Dendritic cell treated with granulocyte-macrophage colony-stimulating factor and Interleukin-4, amounts not matched to agents 40 ng/mL and 50 ng/mL, for 4 days (primary cell): ENCODE measurements at regions of chr6 and their contacts with region 1.

Region 1: GRCh38 chr6:113805173-113805790 is 51.9 kb upstream of the MARCKS start:
- H3K4me3 Mint-ChIP-seq: no peak overlapping the region
- H3K27ac Mint-ChIP-seq: peak overlapping the region; percentile 55
- H3K4me1 Mint-ChIP-seq: peaks cover 56% of the 10 kb centered on the region
- H3K27me3 Mint-ChIP-seq: no peaks in the 10 kb centered on the region

Region 2: DNA sequence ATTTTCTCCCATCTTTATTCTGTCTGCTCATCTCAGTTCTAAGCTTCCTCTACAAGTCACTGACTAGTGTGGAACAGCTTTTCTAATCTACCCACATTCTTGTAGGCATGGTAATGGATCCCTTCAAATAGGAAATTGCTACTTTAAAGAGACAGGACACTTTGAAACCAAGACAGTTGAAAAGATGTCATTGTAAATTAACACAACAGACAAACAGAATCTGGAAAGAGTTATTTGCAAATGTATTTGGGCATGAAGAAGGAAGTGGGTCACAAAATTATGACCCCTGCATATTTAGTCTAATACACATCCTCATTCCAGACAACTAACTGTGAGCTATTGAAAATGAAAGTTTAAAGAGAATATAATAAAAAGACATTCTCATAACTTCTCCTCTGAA is 246.3 kb before region 1 on chr6:
- intact Hi-C with region 1: no loop called
- H3K4me3 Mint-ChIP-seq: no peak overlapping the region
- H3K27ac Mint-ChIP-seq: no peak overlapping the region
- H3K4me1 Mint-ChIP-seq: peaks cover 7% of the 10 kb centered on the region
- H3K27me3 Mint-ChIP-seq: no peaks in the 10 kb centered on the region

Region 3: DNA sequence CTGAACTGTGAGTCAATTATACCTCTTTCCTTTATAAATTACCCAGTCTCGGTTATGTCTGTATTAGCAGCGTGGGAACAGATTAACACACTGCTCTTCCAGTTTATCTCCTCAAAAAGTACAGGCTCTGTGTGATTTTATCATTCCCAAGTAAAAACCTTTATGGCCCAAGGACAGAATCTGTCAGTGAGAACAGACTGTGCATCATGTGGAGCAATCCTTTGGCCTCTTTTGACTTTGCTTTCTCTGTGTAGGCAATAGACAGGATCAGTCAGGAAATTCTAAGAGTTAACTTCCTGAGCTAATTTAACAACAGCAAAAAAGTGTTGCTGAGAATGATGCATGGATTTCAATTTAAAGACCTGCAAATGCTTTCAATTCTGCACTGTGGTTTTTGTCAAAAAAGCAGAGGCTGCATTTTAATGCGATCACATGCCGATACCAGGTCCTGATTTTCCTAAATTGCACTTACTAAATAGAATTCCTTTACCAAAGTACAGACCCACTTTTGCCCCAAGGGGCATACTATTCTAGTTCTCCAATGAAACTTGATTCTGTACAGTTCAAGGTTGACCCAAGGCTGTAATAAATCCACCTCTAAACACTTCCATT is 194.8 kb before region 1 on chr6:
- intact Hi-C with region 1: no loop called
- H3K4me3 Mint-ChIP-seq: no peak overlapping the region
- H3K27ac Mint-ChIP-seq: no peak overlapping the region
- H3K4me1 Mint-ChIP-seq: peaks cover 5% of the 10 kb centered on the region
- H3K27me3 Mint-ChIP-seq: no peaks in the 10 kb centered on the region

Region 4: DNA sequence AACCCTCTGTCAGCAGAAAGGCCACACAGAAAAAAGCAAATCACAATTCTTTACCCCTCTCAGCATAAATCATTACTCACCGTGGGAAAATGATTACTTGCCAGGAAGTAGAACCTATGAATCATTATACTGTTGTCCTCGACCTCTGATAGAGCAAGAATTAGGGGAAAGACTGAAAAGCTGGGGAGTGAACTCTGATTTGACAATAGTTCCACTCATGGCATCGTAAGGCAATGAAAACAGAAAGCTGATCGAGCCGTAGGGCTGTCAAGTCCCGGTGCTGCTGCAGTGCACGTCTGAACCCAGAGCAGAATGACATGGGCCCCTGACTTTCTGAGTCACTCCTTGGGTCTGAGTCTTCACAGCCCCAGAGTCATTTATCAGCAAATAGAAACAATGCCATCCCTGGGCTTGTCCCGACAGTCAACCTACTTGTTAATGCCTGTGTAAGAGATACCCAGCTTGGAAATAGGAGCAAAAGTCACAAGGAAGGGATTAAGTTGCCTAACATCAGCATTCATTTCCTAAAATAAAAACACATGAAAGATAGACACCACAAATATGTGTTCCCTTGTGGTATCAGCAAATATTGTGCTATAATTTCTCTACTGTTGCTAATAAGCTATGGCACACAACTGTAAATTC is 172.9 kb before region 1 on chr6:
- intact Hi-C with region 1: loop called (anchors 5 kb)
- H3K4me3 Mint-ChIP-seq: peak overlapping the region; percentile 48
- H3K27ac Mint-ChIP-seq: peak overlapping the region; percentile 95
- H3K4me1 Mint-ChIP-seq: peaks cover 58% of the 10 kb centered on the region
- H3K27me3 Mint-ChIP-seq: no peaks in the 10 kb centered on the region

Region 5: GRCh38 chr6:113654396-113654795 is 150.9 kb before region 1 on chr6:
- intact Hi-C with region 1: loop called (anchors 5 kb)
- H3K4me3 Mint-ChIP-seq: no peak overlapping the region
- H3K27ac Mint-ChIP-seq: peak overlapping the region; percentile 53
- H3K4me1 Mint-ChIP-seq: peaks cover 44% of the 10 kb centered on the region
- H3K27me3 Mint-ChIP-seq: no peaks in the 10 kb centered on the region

Region 6: GRCh38 chr6:113697632-113698410 is 107.5 kb before region 1 on chr6:
- intact Hi-C with region 1: loop called (anchors 2 kb)
- H3K4me3 Mint-ChIP-seq: no peak overlapping the region
- H3K27ac Mint-ChIP-seq: peak overlapping the region; percentile 82
- H3K4me1 Mint-ChIP-seq: peaks cover 20% of the 10 kb centered on the region
- H3K27me3 Mint-ChIP-seq: no peaks in the 10 kb centered on the region

Region 7: DNA sequence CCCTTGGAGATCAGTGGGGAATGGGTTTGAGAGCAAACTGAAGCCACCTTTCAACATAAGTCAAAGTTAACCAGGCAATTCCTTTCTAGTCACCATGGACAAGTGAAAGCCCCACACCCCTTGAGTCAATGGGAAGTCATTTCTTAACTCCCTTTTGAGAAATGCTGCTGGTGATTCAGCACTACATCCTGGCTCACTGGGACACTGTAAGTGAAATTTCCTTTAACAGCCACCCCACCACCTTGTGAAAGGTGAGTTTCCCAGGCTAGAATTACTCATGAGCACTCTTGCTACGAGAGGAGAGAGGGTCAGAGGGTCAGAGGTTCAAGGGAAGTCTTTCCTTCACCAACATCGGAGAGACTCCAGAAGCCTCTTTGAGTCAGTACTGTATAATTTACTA is 41.4 kb before region 1 on chr6:
- intact Hi-C with region 1: loop called (anchors 5 kb)
- H3K4me3 Mint-ChIP-seq: no peak overlapping the region
- H3K27ac Mint-ChIP-seq: peak overlapping the region; percentile 83
- H3K4me1 Mint-ChIP-seq: peaks cover 35% of the 10 kb centered on the region
- H3K27me3 Mint-ChIP-seq: no peaks in the 10 kb centered on the region

Region 8: GRCh38 chr6:113853252-113853651 is 48.0 kb after region 1 on chr6:
- intact Hi-C with region 1: loop called (anchors 2 kb)
- H3K4me3 Mint-ChIP-seq: no peak overlapping the region
- H3K27ac Mint-ChIP-seq: no peak overlapping the region
- H3K4me1 Mint-ChIP-seq: peaks cover 6% of the 10 kb centered on the region
- H3K27me3 Mint-ChIP-seq: peaks cover 15% of the 10 kb centered on the region

Region 9: DNA sequence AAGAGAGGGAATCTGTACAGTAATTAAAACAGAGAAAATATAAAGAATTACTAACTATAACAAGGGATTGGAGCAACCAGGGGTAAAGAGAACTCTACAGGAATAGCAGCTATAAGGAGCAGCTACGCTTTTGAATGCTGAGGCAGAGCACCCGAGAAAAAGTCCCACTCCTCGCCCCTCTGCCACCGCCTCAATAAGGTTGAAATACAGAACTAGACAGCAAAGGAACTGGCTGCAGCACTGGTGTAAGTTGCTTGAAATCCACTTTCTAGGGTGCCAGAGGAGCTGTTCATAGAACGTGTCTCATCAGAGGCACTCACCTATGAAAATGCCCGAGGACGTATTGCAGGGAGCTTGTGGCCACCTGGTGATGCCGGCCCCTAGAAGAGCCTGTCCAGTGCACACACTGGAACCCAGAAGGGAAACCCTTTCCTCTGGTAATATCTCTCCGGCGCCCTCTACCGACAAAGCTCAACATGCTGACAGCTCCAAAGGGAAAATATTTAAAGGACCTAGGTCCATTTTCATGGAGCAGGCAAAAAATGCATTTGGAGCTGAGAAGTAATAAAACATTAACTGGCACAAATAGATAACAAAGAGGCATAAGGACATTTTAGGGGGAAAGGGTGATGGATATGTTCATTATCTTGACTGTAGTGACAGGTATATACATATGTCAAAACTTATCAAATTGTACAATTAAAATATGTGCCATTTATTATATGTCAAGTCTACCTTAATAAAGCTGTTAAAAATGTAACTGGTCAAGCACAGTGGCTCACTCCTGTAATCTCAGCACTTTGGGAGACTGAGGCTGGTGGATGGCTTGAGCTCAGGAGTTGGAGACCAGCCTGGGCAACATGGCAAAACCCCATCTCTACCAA is 303.1 kb after region 1 on chr6:
- intact Hi-C with region 1: no loop called
- H3K4me3 Mint-ChIP-seq: no peak overlapping the region
- H3K27ac Mint-ChIP-seq: no peak overlapping the region
- H3K4me1 Mint-ChIP-seq: no peaks in the 10 kb centered on the region
- H3K27me3 Mint-ChIP-seq: no peaks in the 10 kb centered on the region